ENCODE measurements at regions of chr1 and their contacts with region 1.

Region 1: GRCh38 chr1:8702850-8703810 is 114.3 kb downstream of the RERE start:
- DNase-seq: peak; percentile 69 to 94
- H3K4me3 ChIP-seq: peak overlapping the region; percentile 65 to 98 (median 76)
- H3K27ac ChIP-seq: peak overlapping the region; percentile 86
- H3K4me1 ChIP-seq: peaks cover 2 to 24% (median 21%) of the 10 kb centered on the region in 4 experiments; a peak in 5 of 7 replicates
- H3K27me3 ChIP-seq: no peaks in the 10 kb centered on the region
- CTCF ChIP-seq: peak in 2 of 3 experiments; percentile 5; a peak in 2 of 4 replicates
- EP300 ChIP-seq: peak in 1 of 2 experiments; percentile 82; a peak in 1 of 3 replicates
- POLR2A ChIP-seq: peak; percentile 78 to 92
- RAD21 ChIP-seq: peak; percentile 11 to 37; a peak in 3 of 4 replicates

Region 2: GRCh38 chr1:8687039-8687438 is 16.1 kb before region 1 on chr1:
- CTCF ChIA-PET with region 1: interaction called, 5 read pairs
- POLR2A ChIA-PET with region 1: interaction called, 73 read pairs
- DNase-seq: no peak
- H3K4me3 ChIP-seq: no peak overlapping the region
- H3K27ac ChIP-seq: no peak overlapping the region
- H3K4me1 ChIP-seq: peaks cover 5 to 9% (median 7%) of the 10 kb centered on the region in 4 experiments; a peak in 4 of 7 replicates
- H3K27me3 ChIP-seq: no peaks in the 10 kb centered on the region
- CTCF ChIP-seq: no peak
- EP300 ChIP-seq: no peak
- POLR2A ChIP-seq: no peak
- RAD21 ChIP-seq: no peak

Region 3: DNA sequence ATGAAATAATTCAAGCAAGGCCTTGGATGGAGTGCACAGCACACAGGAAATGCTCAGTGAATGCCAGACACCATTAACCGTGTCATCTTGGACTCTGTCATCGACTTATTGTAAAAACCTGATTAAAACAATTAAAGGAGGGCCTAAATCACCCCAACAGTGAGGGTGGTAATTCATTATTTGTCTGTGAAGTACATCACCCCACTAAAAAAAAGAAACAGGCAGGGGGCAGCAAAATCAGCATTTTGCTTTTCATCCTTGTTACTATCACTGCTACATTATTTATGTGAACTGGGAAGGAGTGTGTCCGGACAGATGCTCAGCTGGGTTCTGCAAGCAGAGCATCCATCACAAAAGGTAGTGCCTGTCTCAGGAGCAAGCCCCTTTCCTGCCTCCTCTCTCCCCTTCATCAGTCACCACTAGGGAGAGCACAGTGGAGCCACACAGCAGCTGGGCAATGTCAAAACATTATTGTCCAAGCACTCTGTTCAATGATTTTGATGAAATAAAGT is 15.8 kb after region 1 on chr1:
- CTCF ChIA-PET with region 1: interaction called, 6 read pairs
- POLR2A ChIA-PET with region 1: interaction called, 22 read pairs
- DNase-seq: no peak
- H3K4me3 ChIP-seq: no peak overlapping the region
- H3K27ac ChIP-seq: no peak overlapping the region
- H3K4me1 ChIP-seq: peaks cover 0 to 14% (median 7%) of the 10 kb centered on the region in 4 experiments; a peak in 5 of 7 replicates
- H3K27me3 ChIP-seq: no peaks in the 10 kb centered on the region
- CTCF ChIP-seq: peak in 2 of 3 experiments; percentile 39 to 42; a peak in 2 of 4 replicates
- EP300 ChIP-seq: no peak
- POLR2A ChIP-seq: no peak
- RAD21 ChIP-seq: peak in 1 of 2 experiments; percentile 3; a peak in 1 of 4 replicates

Measured in H1 (cell line).